HCT116 (cell line): ENCODE measurements at regions of chr15 and their contacts with region 1.

Region 1: GRCh38 chr15:67065444-67066093 is at the start of gene SMAD3:
- DNase-seq: peak; percentile 89
- ATAC-seq: peak; percentile 77
- H3K4me3 ChIP-seq: peak within 1 kb of the TSS; percentile 81 to 90
- H3K27ac ChIP-seq: peak within 1 kb of the TSS; percentile 91
- H3K4me1 ChIP-seq: peaks cover 65 to 73% of the 10 kb centered on the region in 2 experiments
- H3K27me3 ChIP-seq: no peaks in the 10 kb centered on the region
- CTCF ChIP-seq: no peak
- POLR2A ChIP-seq: no peak
- RAD21 ChIP-seq: no peak
- total RNA-seq, gene SMAD3: 89.2 TPM

Region 2: DNA sequence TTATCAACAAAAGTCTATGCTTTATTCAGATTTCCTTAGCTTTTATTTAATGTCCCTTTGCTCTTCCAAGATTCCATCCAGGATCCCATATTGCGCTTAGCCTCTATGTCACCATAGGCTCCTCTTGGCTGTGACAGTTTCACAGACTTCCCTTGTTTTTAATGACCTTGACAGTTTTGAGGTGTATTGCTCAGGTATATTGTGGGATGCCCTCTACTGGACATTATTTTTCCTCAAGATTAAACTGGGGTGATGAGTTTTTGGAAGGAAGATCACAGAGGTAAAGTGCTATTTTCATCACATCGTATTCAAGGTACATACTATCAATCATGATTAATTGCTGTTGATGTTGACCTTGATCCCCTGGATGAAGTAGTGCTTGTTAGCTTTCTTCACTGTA is 99.3 kb before region 1 on chr15:
- CTCF ChIA-PET with region 1: no interaction called
- POLR2A ChIA-PET with region 1: no interaction called
- RAD21 ChIA-PET with region 1: no interaction called
- intact Hi-C with region 1: loop called (anchors 5 kb)
- DNase-seq: peak; percentile 15
- ATAC-seq: peak; percentile 68
- H3K4me3 ChIP-seq: no peak overlapping the region
- H3K27ac ChIP-seq: no peak overlapping the region
- H3K4me1 ChIP-seq: peaks cover 0 to 3% of the 10 kb centered on the region in 2 experiments; a peak in 1 of 4 replicates
- H3K27me3 ChIP-seq: no peaks in the 10 kb centered on the region
- CTCF ChIP-seq: peak; percentile 19 to 61 (median 37); a peak in 4 of 6 replicates
- POLR2A ChIP-seq: no peak
- RAD21 ChIP-seq: peak; percentile 57

Region 3: GRCh38 chr15:67048281-67049279 is 17.0 kb before region 1 on chr15:
- CTCF ChIA-PET with region 1: interaction called, 3 read pairs
- POLR2A ChIA-PET with region 1: interaction called, 11 read pairs
- RAD21 ChIA-PET with region 1: interaction called, 3 to 4 read pairs
- intact Hi-C with region 1: no loop called
- DNase-seq: no peak
- ATAC-seq: peak; percentile 42
- H3K4me3 ChIP-seq: no peak overlapping the region
- H3K27ac ChIP-seq: peak overlapping the region; percentile 71
- H3K4me1 ChIP-seq: peaks cover 50 to 53% of the 10 kb centered on the region in 2 experiments
- H3K27me3 ChIP-seq: no peaks in the 10 kb centered on the region
- CTCF ChIP-seq: no peak
- POLR2A ChIP-seq: no peak
- RAD21 ChIP-seq: no peak

Region 4: DNA sequence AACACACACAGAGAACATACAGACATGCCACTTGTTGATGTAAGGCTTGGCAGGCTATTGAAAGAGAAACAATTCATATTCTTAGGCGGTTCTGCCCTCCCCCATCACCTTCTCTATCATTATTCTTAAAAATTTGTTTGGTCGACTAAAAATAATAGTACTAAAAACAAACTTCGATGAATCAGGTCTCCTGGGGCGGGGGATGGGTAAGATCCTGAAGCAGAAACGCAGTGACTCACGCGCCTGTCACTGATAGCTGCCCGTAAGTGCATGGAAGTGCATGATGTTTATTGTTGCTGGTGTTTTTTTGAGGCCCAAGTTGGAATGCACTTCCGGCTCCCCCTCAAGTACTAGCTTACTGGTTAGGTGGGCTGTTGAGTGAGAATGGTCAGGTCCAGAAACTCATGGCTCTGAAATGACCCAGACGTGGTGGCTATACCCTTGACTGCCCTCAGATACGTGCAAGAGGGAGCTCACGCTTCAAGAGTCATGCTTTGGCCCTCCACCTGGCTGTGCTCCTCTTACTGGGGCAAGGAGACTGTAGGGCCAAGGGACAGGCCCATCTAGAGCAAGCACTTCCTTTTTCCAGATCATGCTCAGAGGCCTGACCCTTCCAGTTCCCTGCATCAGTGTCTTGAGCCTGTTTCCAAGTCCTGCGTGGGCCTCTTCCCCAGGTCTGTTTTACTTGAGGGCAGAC is 10.7 kb after region 1 on chr15:
- CTCF ChIA-PET with region 1: no interaction called
- POLR2A ChIA-PET with region 1: interaction called, 10 read pairs
- RAD21 ChIA-PET with region 1: interaction called in 1 of 2 experiments, 3 read pairs
- intact Hi-C with region 1: no loop called
- DNase-seq: peak; percentile 69
- ATAC-seq: peak; percentile 78
- H3K4me3 ChIP-seq: peak overlapping the region in 1 of 2 experiments; percentile 19; a peak in 2 of 4 replicates
- H3K27ac ChIP-seq: peak overlapping the region; percentile 53
- H3K4me1 ChIP-seq: peaks cover 85 to 98% of the 10 kb centered on the region in 2 experiments
- H3K27me3 ChIP-seq: no peaks in the 10 kb centered on the region
- CTCF ChIP-seq: 0 out of 6 replicates have a peak, but pooled peaks of 1 of the 3 experiments have one; percentile 7
- POLR2A ChIP-seq: no peak
- RAD21 ChIP-seq: no peak

Region 5: DNA sequence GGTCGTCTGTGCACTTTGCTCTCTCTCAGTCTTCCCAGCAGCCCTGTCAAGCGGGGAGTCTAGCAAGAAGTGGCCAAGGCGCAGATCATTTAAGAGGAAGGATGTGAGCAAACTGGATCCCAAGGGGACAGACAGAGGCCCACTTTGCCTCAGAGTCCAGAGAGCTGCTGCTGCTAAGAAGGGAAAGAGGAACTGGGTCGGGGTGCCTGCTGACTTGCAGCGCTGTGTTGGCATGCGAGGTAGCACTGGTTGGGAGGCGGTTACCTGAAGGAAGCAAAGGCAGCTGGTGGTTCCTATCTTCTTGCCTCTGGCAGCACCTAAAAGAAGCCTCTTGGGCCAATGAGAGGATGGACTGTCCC is 27.9 kb after region 1 on chr15:
- CTCF ChIA-PET with region 1: no interaction called
- POLR2A ChIA-PET with region 1: no interaction called
- RAD21 ChIA-PET with region 1: no interaction called
- intact Hi-C with region 1: no loop called
- DNase-seq: no peak
- ATAC-seq: no peak
- H3K4me3 ChIP-seq: no peak overlapping the region
- H3K27ac ChIP-seq: no peak overlapping the region
- H3K4me1 ChIP-seq: peaks cover 67 to 86% of the 10 kb centered on the region in 2 experiments
- H3K27me3 ChIP-seq: no peaks in the 10 kb centered on the region
- CTCF ChIP-seq: no peak
- POLR2A ChIP-seq: no peak
- RAD21 ChIP-seq: no peak

Region 6: GRCh38 chr15:67109141-67110034 is 43.8 kb after region 1 on chr15:
- CTCF ChIA-PET with region 1: interaction called, 3 read pairs
- POLR2A ChIA-PET with region 1: interaction called, 4 read pairs
- RAD21 ChIA-PET with region 1: interaction called, 3 to 5 read pairs
- intact Hi-C with region 1: loop called (anchors 1 kb)
- DNase-seq: no peak
- ATAC-seq: 0 out of 2 replicates have a peak, but pooled peaks have one; percentile 6
- H3K4me3 ChIP-seq: no peak overlapping the region
- H3K27ac ChIP-seq: peak overlapping the region; percentile 48
- H3K4me1 ChIP-seq: peaks cover 71 to 91% of the 10 kb centered on the region in 2 experiments
- H3K27me3 ChIP-seq: no peaks in the 10 kb centered on the region
- CTCF ChIP-seq: no peak
- POLR2A ChIP-seq: no peak
- RAD21 ChIP-seq: no peak

Region 7: DNA sequence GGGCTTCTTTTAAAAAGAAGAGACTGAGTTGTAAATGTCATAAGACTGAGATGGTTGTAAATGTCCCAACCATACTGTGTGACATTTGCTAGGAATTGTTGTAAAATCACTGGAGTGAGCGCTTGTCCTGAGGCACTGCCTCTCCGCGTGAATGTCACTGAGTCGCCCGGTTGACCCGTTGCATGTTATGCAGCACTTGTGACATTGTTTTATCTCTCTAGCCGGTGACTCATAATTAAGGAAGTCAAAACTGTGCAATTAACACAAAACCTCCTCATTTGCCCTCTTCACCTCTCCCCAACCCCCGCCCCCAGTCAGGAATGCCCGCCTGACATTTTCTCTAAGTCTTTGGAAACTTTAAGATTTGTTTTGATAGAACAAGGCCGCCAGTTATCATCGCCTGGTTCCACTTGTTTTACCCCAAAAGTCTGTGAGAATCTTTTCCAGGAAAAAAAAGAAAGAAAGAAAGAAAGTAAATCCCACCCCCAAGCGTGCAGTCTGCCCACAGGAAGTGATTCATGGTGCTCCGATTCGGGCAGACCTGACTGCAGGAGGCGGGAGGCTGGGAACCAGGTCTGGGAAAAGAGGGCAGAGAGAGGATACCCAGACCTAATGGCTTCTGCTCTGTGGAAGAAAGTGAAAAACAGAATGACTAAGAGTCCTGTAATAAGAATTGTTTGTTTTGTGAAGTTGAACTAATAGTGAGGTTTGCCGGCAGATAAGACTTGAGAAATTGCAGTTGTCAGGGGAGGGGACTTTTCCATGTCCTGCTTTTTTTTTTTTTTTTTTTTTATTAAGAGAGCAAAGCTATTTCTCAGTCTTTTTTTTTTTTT is 84.7 kb after region 1 on chr15:
- CTCF ChIA-PET with region 1: no interaction called
- POLR2A ChIA-PET with region 1: interaction called, 4 read pairs
- RAD21 ChIA-PET with region 1: no interaction called
- intact Hi-C with region 1: loop called (anchors 2 kb)
- DNase-seq: peak; percentile 96
- ATAC-seq: peak; percentile 85
- H3K4me3 ChIP-seq: peak overlapping the region; percentile 7 to 30
- H3K27ac ChIP-seq: peak overlapping the region; percentile 84
- H3K4me1 ChIP-seq: peaks cover 67 to 95% of the 10 kb centered on the region in 2 experiments
- H3K27me3 ChIP-seq: no peaks in the 10 kb centered on the region
- CTCF ChIP-seq: no peak
- POLR2A ChIP-seq: no peak
- RAD21 ChIP-seq: no peak

Region 8: DNA sequence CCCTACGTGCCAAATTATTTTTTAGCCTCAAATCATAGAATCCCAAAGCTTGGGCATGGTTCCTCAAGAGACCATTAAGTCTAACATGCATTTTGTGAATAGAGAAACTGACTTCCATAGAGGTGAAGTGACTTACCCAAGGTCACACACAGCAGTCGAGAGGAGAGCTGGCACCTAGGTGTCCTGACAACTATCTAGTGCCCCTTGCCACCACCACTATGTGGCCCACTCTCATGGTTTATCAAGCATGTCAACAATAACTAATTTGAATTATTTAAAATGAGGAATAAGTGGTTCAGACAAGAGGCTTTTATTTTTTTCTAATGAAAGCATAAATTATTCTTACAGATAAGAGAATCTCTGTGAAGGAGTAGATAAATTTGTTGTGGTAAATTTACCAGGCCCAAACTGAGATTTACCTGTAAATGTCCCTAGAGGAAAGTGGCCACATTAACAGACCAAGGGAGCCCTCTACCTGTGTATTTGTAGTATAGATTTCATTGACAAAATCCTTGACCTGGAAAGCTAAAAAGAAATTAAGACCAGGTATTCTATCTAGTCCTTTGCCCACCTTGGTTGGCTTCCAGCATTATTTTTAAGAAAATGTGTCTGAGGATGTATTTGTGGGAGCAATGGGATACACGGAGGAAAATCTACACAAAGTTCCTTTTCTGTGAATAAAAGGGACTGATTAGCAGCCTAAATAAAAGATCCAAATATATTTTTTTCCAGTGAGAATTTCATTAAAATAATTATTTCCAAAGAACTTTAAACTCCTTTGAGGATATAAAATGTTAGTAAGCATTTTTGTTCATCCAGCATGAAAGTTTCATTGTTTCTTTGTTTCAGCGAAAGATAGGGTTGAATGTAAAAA is 238.2 kb after region 1 on chr15:
- CTCF ChIA-PET with region 1: no interaction called
- POLR2A ChIA-PET with region 1: no interaction called
- RAD21 ChIA-PET with region 1: no interaction called
- intact Hi-C with region 1: loop called (anchors 10 kb)
- DNase-seq: peak; percentile 42
- ATAC-seq: peak; percentile 91
- H3K4me3 ChIP-seq: no peak overlapping the region
- H3K27ac ChIP-seq: no peak overlapping the region
- H3K4me1 ChIP-seq: no peaks in the 10 kb centered on the region
- H3K27me3 ChIP-seq: no peaks in the 10 kb centered on the region
- CTCF ChIP-seq: peak; percentile 46 to 82 (median 65)
- POLR2A ChIP-seq: no peak
- RAD21 ChIP-seq: peak; percentile 87